Ovary (tissue), 10 donors: ENCODE measurements at regions of chr15 and their contacts with region 1.

Region 1: GRCh38 chr15:84929744-84930371 is 45.4 kb downstream of the SLC28A1 start:
- DNase-seq: no peak
- H3K4me3 ChIP-seq: no peak overlapping the region
- H3K27ac ChIP-seq: no peak overlapping the region
- H3K4me1 ChIP-seq: peaks cover 2% of the 10 kb centered on the region
- H3K27me3 ChIP-seq: no peaks in the 10 kb centered on the region
- CTCF ChIP-seq: no peak
- EP300 ChIP-seq: no peak
- POLR2A ChIP-seq: no peak

Region 2: DNA sequence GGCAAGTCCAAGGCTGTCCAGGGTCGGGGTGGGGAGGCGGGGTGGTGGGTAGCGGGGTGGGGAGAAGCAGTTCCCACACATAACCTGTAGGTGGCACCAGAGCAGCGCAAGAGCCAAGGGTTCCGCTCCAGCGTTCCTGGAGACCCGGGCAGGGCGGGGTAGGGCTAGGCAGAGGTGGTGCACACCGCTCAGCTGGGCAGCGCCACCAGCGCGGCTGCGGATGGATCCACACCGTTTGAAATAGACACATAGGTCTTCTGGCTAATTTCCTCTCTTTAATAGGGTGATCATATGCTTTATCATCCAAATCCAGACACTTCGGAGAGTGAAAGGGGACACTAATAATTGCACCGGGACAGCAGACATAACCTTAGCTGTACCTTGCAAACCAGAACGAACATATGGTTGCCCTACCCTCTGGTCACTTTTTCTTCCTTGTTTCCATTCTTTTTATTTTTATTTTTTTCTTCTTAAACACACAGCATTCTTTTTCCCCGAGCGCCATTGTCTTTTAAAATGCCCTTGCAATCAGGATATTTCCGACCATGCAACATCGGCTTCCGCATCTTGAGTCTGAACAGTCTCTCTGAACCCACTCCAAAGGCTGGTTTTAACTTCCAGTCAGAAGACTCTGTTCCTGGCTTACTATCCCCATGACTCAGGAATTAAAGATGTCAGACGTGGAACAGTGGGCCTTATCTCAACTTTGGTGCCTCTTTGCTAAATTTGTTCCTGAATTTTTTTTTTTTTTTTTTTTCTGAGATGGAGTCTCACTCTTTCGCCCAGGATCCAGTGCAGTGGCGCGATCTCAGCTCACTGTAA is 341.6 kb before region 1 on chr15:
- intact Hi-C with region 1: loop called (anchors 5 to 10 kb)
- DNase-seq: peak; percentile 82 to 89 (median 86)
- H3K4me3 ChIP-seq: peak overlapping the region; percentile 28
- H3K27ac ChIP-seq: no peak overlapping the region
- H3K4me1 ChIP-seq: peaks cover 3% of the 10 kb centered on the region
- H3K27me3 ChIP-seq: no peaks in the 10 kb centered on the region
- CTCF ChIP-seq: peak; percentile 55 to 85 (median 58)
- EP300 ChIP-seq: no peak
- POLR2A ChIP-seq: no peak

Region 3: GRCh38 chr15:84600851-84601838 is 328.7 kb before region 1 on chr15 and contains the start of gene ZSCAN2:
- intact Hi-C with region 1: loop called in 3 of 4 experiments (anchors 5 to 10 kb)
- DNase-seq: peak; percentile 92 to 96 (median 94)
- H3K4me3 ChIP-seq: peak within 1 kb of the TSS; percentile 85
- H3K27ac ChIP-seq: peak within 1 kb of the TSS; percentile 14 to 78
- H3K4me1 ChIP-seq: peaks cover 5% of the 10 kb centered on the region
- H3K27me3 ChIP-seq: no peaks in the 10 kb centered on the region
- CTCF ChIP-seq: no peak
- EP300 ChIP-seq: no peak
- POLR2A ChIP-seq: peak; percentile 26
- total RNA-seq, gene ZSCAN2: 5.6 to 13.3 (median 9.2) TPM

Region 4: GRCh38 chr15:84658080-84658787 is 271.6 kb before region 1 on chr15 and contains the start of gene NMB:
- intact Hi-C with region 1: loop called in 1 of 4 experiments (anchors 10 kb)
- DNase-seq: peak; percentile 76 to 86 (median 82)
- H3K4me3 ChIP-seq: peak within 1 kb of the TSS; percentile 69
- H3K27ac ChIP-seq: peak within 1 kb of the TSS; percentile 63 to 85
- H3K4me1 ChIP-seq: peaks cover 2% of the 10 kb centered on the region
- H3K27me3 ChIP-seq: no peaks in the 10 kb centered on the region
- CTCF ChIP-seq: peak in 2 of 3 donors; percentile 56 to 77
- EP300 ChIP-seq: no peak
- POLR2A ChIP-seq: no peak
- total RNA-seq, gene NMB: 5.1 to 11.5 (median 7.3) TPM

Region 5: GRCh38 chr15:84867997-84868885 is 61.6 kb before region 1 on chr15:
- intact Hi-C with region 1: loop called in 1 of 4 experiments (anchors 5 kb)
- DNase-seq: no peak
- H3K4me3 ChIP-seq: no peak overlapping the region
- H3K27ac ChIP-seq: no peak overlapping the region
- H3K4me1 ChIP-seq: no peaks in the 10 kb centered on the region
- H3K27me3 ChIP-seq: no peaks in the 10 kb centered on the region
- CTCF ChIP-seq: no peak
- EP300 ChIP-seq: no peak
- POLR2A ChIP-seq: no peak

Region 6: DNA sequence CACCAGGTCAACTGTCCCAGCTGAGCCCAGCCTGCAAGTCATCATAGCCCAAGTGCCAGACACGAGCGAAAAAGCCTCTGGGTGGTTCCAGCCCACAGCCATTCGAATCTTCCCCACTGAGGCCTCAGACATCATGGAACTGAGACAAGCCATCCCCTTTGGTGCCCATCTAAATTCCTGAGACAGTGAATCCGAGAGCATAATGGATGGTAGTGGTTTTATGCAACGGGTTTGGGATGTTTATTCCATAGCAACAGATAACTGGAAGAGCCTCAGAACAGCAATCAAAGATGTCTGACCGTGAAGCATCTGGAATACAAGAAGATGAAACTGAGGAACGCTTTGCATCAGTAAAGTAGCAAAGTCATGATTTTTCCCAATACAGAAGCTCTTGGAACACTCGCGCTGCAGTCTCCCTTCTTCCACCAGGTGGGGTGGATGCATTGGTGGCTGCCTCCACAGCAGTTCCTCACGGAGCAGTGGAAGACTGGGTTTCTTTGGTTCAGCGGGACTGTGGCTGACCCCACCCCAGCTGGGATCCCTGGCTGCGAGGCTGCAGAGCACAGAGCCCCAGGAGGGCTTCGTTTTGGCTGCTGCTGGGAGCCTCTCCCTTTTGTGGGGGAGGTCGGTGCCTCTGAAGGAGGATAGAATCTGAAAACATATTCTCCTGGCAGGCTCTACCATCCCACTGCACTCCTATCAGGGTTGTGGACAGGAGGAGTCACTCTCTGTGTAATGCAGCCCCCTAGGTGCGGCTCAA is 25.4 kb after region 1 on chr15:
- intact Hi-C with region 1: no loop called
- DNase-seq: peak; percentile 70 to 85 (median 80)
- H3K4me3 ChIP-seq: peak overlapping the region; percentile 25
- H3K27ac ChIP-seq: no peak overlapping the region
- H3K4me1 ChIP-seq: peaks cover 3% of the 10 kb centered on the region
- H3K27me3 ChIP-seq: no peaks in the 10 kb centered on the region
- CTCF ChIP-seq: peak; percentile 68 to 84 (median 81)
- EP300 ChIP-seq: no peak
- POLR2A ChIP-seq: no peak